ENCODE measurements at regions of chr12 and their contacts with region 1.

Region 1: GRCh38 chr12:9750276-9751203 is 10.2 kb downstream of the CD69 start:
- DNase-seq: peak; percentile 59
- ATAC-seq: peak; percentile 62
- H3K4me3 Mint-ChIP-seq: peak overlapping the region; percentile 77
- H3K27ac Mint-ChIP-seq: peak overlapping the region; percentile 75
- H3K4me1 Mint-ChIP-seq: peaks cover 47% of the 10 kb centered on the region
- H3K27me3 Mint-ChIP-seq: no peaks in the 10 kb centered on the region

Region 2: GRCh38 chr12:9797722-9798619 is 47.4 kb after region 1 on chr12:
- POLR2A ChIA-PET with region 1: interaction called, 420 read pairs
- DNase-seq: no peak
- ATAC-seq: peak; percentile 84
- H3K4me3 Mint-ChIP-seq: peak overlapping the region; percentile 35
- H3K27ac Mint-ChIP-seq: peak overlapping the region; percentile 68
- H3K4me1 Mint-ChIP-seq: peaks cover 39% of the 10 kb centered on the region
- H3K27me3 Mint-ChIP-seq: peaks cover 4% of the 10 kb centered on the region

Measured in activated naive CD8-positive, alpha-beta T cell treated with anti-CD3 and anti-CD28 coated beads, Interleukin-2, amount 10 ng/mL, durations not matched to agents 7 days and 5 days (primary cell).